Gastrocnemius medialis (tissue), 4 donors: ENCODE measurements at regions of chr6 and their contacts with region 1.

Region 1: DNA sequence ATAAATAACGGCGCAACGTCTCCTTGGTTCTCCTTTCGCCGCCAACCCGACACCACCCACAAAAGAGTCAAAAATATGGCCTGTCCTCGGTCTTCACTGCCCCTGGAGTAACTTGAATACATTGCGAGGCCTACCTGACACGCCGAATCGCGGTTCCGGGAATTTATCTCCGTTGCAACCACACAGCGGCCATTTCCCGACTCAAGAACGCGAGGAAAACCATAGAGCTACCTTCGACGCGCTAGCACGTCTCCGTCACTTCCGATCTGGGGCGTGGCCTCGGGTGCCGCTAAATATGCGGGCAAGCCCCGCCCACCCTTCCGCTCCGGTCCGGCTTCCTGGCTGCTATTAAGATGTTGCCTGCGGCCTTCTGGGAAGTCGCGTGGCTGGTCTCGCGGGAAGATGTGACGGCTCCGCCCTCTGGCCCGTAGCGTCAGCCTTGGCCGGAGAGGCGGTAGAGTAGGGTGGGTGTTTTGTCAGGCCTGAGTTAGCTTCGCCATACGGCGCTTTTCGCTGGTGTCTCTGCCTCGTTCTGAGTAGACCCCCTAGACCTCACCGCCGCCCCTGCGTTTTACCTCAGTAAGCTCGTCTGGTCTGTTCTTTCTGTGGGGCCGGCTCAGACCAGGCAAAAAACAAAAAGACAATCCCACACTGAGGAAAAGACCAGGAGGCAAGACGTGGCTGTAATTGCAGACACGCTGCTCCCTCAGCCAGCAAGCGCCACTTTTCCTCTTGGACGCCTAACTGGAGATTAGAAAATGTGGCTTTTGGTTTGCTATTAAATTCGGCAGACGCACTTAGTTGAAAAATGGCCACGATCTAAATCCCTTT is at the start of gene BCLAF1:
- DNase-seq: peak; percentile 99 to 100
- ATAC-seq: peak; percentile 85 to 91
- H3K4me3 ChIP-seq: peak within 1 kb of the TSS; percentile 86 to 100 (median 96)
- H3K27ac ChIP-seq: peak within 1 kb of the TSS; percentile 99 to 100 (median 100)
- H3K4me1 ChIP-seq: peaks cover 44 to 48% of the 10 kb centered on the region in 2 donors
- H3K27me3 ChIP-seq: no peaks in the 10 kb centered on the region
- CTCF ChIP-seq: peak in 1 of 5 experiments; percentile 6
- POLR2A ChIP-seq: peak; percentile 98
- total RNA-seq, gene BCLAF1: 27.3 to 83.0 (median 61.8) TPM

Region 2: GRCh38 chr6:136249811-136250685 is 39.7 kb before region 1 on chr6 and contains the start of gene MTFR2:
- in situ Hi-C with region 1: no loop called
- intact Hi-C with region 1: loop called (anchors 1 kb)
- DNase-seq: peak; percentile 97
- ATAC-seq: peak; percentile 100
- H3K4me3 ChIP-seq: peak within 1 kb of the TSS; percentile 73 to 81 (median 74)
- H3K27ac ChIP-seq: peak within 1 kb of the TSS; percentile 71 to 78 (median 76)
- H3K4me1 ChIP-seq: peaks cover 16 to 22% of the 10 kb centered on the region in 2 donors
- H3K27me3 ChIP-seq: no peaks in the 10 kb centered on the region
- CTCF ChIP-seq: no peak
- POLR2A ChIP-seq: peak; percentile 14 to 61
- total RNA-seq, gene MTFR2: 0.51 TPM in 1 of 4 donors, not detected in the others

Region 3: GRCh38 chr6:136262940-136263339 is 26.9 kb before region 1 on chr6:
- in situ Hi-C with region 1: no loop called
- intact Hi-C with region 1: no loop called
- DNase-seq: no peak
- ATAC-seq: no peak
- H3K4me3 ChIP-seq: no peak overlapping the region
- H3K27ac ChIP-seq: no peak overlapping the region
- H3K4me1 ChIP-seq: peaks cover 0 to 4% of the 10 kb centered on the region in 2 donors
- H3K27me3 ChIP-seq: no peaks in the 10 kb centered on the region
- CTCF ChIP-seq: no peak
- POLR2A ChIP-seq: no peak

Region 4: GRCh38 chr6:136822376-136823127 is 532.8 kb after region 1 on chr6 and contains the start of gene PEX7:
- in situ Hi-C with region 1: no loop called
- intact Hi-C with region 1: loop called (anchors 5 kb)
- DNase-seq: peak; percentile 86
- ATAC-seq: peak; percentile 96 to 97
- H3K4me3 ChIP-seq: peak within 1 kb of the TSS; percentile 67 to 77 (median 72)
- H3K27ac ChIP-seq: peak within 1 kb of the TSS; percentile 76 to 92 (median 91)
- H3K4me1 ChIP-seq: peaks cover 20 to 27% of the 10 kb centered on the region in 2 donors
- H3K27me3 ChIP-seq: no peaks in the 10 kb centered on the region
- CTCF ChIP-seq: peak; percentile 56 to 79 (median 63)
- POLR2A ChIP-seq: peak; percentile 59 to 62
- total RNA-seq, gene PEX7: 0.32 to 10.6 (median 6.0) TPM